Motor neuron (in vitro differentiated cells): ENCODE measurements at regions of chr16 and their contacts with region 1.

Region 1: DNA sequence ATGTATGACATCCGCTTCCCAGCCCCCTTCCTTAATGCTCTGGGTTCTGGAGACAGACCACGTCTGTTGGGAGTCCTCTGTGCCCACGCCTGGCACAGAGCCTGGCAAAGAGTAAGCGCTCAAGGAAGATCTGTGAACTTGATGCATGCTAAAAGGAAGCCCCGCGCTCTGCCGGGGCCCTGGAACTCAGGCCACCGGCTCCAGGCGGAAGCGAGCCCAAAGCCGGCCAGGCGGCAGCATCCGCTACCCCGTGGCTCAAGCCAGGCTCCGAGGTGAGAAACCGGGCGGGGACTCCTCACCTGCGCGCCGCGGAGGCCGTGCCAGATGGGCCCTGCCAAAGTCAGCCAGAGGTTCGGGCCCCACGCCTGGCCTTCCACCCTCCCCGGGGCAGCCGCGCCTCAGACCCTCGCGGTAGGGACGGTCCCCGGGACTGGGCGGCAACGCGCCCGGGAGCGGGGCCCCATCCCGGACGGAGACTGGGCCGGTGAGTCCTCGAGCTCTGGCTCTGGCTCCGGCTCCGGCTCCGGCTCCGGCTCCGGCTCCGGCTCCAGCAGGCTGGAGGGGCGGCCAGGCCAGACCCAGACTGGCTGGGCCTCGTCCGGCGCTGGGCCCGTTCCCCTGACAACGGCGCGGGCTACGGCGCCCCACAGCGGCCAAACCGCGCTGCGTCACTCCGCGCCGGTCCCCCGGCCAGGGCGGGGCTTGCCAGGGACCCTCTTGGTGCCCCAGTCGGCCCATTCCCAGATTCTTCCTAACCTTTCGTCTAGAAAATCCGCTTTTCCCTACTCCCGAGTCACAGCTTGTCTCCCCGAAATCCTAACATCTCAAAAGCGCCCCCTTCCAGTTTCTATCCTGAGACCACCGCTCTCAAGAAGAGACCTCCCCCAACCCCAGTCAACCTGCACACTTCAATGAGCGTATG is at the start of gene ZDHHC1:
- ATAC-seq: peak; percentile 94 to 97 (median 96)
- H3K4me3 ChIP-seq: peak within 1 kb of the TSS; percentile 44 to 69 (median 57)
- H3K27ac ChIP-seq: peak within 1 kb of the TSS; percentile 5 to 58
- H3K4me1 ChIP-seq: peaks cover 2 to 19% of the 10 kb centered on the region in 2 donors
- total RNA-seq, gene ZDHHC1: 3.4 to 14.6 (median 4.6) TPM

Region 2: GRCh38 chr16:66947302-66948065 is 468.6 kb before region 1 on chr16:
- in situ Hi-C with region 1: loop called in 1 of 9 experiments (anchors 25 kb)
- ATAC-seq: peak; percentile 53 to 86 (median 63)
- H3K4me3 ChIP-seq: peak overlapping the region in 3 of 5 donors; percentile 12 to 24 (median 20)
- H3K27ac ChIP-seq: no peak overlapping the region
- H3K4me1 ChIP-seq: peaks cover 4 to 10% of the 10 kb centered on the region in 2 donors

Region 3: DNA sequence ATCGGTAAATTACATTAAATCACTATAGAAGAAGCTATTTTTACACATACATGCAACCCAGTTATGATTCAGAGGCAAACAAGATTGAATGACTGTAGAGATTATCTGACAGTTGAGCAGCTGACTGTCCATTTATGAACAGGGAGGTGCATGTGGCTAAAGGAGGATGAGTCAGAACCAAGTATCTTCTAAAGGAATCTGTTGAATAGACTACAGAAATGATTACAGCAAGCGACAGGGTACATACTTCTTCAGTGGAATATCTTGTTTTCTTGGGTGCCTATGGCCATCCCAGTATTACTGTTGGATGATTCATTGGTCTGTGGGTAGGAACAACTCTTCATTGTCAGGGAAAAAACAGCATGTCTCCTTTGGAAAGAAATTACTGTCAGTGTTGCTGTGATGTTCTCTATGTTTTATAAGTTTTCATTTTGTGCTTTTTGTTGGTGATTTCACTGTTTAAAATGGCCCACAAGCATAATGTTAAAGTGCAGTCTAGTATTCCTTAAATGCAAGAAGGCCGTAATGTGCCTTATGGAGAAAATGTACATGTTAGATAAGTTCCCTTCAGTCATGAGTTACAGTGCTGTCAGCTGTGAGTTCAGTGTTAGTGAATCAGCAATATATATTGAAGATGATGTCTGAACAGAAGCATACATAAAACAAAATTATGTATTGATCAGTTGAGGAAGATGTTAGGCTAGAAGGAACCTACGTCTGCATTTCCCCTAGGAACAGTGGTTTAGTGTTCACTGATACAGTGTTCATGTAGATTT is 360.2 kb before region 1 on chr16:
- in situ Hi-C with region 1: no loop called
- ATAC-seq: peak; percentile 64 to 100 (median 92)
- H3K4me3 ChIP-seq: no peak overlapping the region
- H3K27ac ChIP-seq: no peak overlapping the region
- H3K4me1 ChIP-seq: peaks cover 0 to 3% of the 10 kb centered on the region in 2 donors

Region 4: GRCh38 chr16:67226804-67227557 is 189.2 kb before region 1 on chr16 and contains the start of gene TMEM208:
- in situ Hi-C with region 1: loop called in 1 of 9 experiments (anchors 25 kb)
- ATAC-seq: peak; percentile 88 to 96 (median 90)
- H3K4me3 ChIP-seq: peak within 1 kb of the TSS; percentile 69 to 99 (median 93)
- H3K27ac ChIP-seq: peak within 1 kb of the TSS; percentile 94 to 96
- H3K4me1 ChIP-seq: peaks cover 11 to 12% of the 10 kb centered on the region in 2 donors
- total RNA-seq, gene TMEM208: 39.4 to 83.1 (median 58.0) TPM

Region 5: GRCh38 chr16:67260426-67261075 is 155.6 kb before region 1 on chr16:
- in situ Hi-C with region 1: loop called in 2 of 9 experiments (anchors 25 kb)
- ATAC-seq: peak; percentile 59 to 89 (median 78)
- H3K4me3 ChIP-seq: no peak overlapping the region
- H3K27ac ChIP-seq: no peak overlapping the region
- H3K4me1 ChIP-seq: peaks cover 0 to 4% of the 10 kb centered on the region in 2 donors

Region 6: GRCh38 chr16:67697422-67698185 is 281.5 kb after region 1 on chr16:
- in situ Hi-C with region 1: no loop called
- ATAC-seq: no peak
- H3K4me3 ChIP-seq: no peak overlapping the region
- H3K27ac ChIP-seq: no peak overlapping the region
- H3K4me1 ChIP-seq: no peaks in the 10 kb centered on the region